Breast epithelium (tissue), 4 donors: ENCODE measurements at regions of chr16 and their contacts with region 1.

Region 1: DNA sequence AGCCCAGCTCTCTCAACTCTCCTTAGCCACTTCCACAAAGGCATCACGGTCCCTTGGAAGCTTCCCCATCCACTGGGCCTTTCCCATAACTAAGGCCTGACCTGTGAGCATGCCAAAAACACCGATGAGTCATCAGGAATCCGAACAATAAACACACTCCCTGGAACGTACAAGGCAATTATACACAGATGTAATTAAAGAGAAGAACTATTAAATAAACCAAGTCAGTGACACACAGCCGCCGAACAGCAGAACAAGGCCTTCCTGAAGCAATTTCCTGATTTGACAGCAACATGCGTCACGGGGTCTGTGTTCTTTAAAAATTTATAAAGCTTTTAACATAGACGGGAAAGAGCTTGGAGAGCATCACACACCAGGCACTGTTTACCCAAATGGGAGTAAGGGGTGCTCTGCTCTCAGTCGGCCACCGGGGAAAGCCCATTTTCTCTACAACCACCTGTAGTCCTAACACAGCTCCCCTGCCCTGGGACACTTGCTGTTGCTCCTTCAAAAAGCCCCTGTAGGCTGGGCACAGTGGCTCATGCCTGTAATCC is 29.4 kb downstream of the COG7 start:
- DNase-seq: peak; percentile 83 to 95
- H3K4me3 ChIP-seq: no peak overlapping the region
- H3K27ac ChIP-seq: peak overlapping the region; percentile 98
- H3K4me1 ChIP-seq: peaks cover 9 to 10% of the 10 kb centered on the region in 2 donors
- H3K27me3 ChIP-seq: no peaks in the 10 kb centered on the region
- CTCF ChIP-seq: no peak
- POLR2A ChIP-seq: no peak

Region 2: DNA sequence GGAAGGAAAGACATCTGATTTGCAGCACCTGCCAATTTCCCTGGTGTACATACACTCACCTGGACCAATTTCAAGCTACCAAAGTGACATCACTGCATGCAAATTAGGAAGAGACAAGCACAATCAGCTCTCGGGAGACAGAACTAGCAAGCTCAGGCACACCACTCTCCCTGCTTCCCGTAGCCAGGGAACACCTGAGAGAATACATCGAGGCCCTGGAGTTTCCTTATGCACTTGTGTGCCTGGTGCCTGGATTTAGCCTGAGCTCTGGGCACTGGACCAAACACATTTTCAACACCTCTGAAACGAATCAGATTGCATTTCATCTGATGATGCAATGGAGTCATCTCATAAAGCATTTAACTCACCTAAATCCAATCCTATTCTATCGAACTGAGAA is 499.1 kb before region 1 on chr16:
- intact Hi-C with region 1: loop called (anchors 5 kb)
- DNase-seq: no peak
- H3K4me3 ChIP-seq: no peak overlapping the region
- H3K27ac ChIP-seq: no peak overlapping the region
- H3K4me1 ChIP-seq: no peaks in the 10 kb centered on the region
- H3K27me3 ChIP-seq: peaks cover 0 to 2% of the 10 kb centered on the region in 2 donors
- CTCF ChIP-seq: no peak
- POLR2A ChIP-seq: no peak

Region 3: DNA sequence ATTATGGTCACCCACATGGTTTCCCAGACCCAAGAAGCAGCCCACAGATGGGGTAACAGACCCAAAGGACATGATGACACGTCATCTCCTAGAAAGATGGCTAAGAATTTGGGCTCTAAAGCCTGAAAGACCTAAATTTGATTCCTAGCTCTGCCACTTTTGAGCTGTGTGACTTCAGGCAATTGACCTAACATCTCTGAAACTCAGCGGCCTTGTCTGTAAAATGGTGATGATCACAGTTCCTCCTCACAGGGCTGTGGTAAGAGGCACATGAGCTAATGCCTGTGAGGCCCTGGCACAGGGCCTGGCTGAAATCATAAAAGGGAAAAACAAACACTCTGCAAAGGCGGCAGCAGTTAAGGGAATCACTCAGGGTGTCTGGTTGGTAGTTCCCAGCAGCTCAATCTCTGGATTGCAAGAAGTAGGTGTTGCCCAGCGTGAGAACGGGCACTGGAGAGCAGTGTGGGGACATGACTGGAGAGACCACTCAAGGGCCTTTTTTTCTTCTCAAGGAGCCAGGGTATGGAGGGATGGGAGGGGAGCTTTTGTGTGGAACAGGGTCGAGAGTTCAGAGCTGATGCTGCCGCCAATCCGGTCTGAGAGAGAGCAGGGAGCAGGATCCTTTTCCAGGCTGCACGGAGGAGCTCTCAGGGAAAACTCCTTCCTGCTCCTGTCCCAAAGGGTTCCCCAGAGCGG is 106.5 kb before region 1 on chr16:
- intact Hi-C with region 1: loop called (anchors 10 kb)
- DNase-seq: no peak
- H3K4me3 ChIP-seq: peak overlapping the region in 1 of 3 donors; percentile 20
- H3K27ac ChIP-seq: peak overlapping the region; percentile 41 to 55
- H3K4me1 ChIP-seq: no peaks in the 10 kb centered on the region
- H3K27me3 ChIP-seq: no peaks in the 10 kb centered on the region
- CTCF ChIP-seq: no peak
- POLR2A ChIP-seq: no peak

Region 4: DNA sequence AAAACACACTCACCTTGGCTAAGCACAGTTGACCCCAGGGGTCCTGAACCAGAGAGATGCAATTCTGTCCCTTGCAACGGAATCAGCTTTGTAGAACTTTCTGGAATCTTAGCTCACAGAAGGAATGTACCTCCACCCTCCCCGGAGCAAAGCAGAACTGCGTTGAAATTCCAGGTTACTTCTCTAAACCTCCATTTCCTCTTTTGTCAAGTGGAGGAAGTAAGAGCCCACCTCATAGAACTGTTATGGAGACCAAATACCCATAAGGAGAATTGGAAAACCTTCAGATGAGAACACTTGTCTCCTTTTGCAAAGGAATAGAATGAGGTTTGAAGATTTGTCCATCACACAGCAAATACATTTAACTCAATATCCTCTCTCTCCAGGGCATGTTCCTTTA is 1029.2 kb after region 1 on chr16:
- intact Hi-C with region 1: no loop called
- DNase-seq: no peak
- H3K4me3 ChIP-seq: no peak overlapping the region
- H3K27ac ChIP-seq: no peak overlapping the region
- H3K4me1 ChIP-seq: no peaks in the 10 kb centered on the region
- H3K27me3 ChIP-seq: no peaks in the 10 kb centered on the region
- CTCF ChIP-seq: no peak
- POLR2A ChIP-seq: no peak